Right ventricle myocardium superior (tissue), 1 donor: ENCODE measurements at regions of chr9 and their contacts with region 1.

Region 1: GRCh38 chr9:116860509-116861120 is 173.5 kb downstream of the TRIM32 start:
- DNase-seq: peak; percentile 64
- ATAC-seq: peak; percentile 74

Region 2: DNA sequence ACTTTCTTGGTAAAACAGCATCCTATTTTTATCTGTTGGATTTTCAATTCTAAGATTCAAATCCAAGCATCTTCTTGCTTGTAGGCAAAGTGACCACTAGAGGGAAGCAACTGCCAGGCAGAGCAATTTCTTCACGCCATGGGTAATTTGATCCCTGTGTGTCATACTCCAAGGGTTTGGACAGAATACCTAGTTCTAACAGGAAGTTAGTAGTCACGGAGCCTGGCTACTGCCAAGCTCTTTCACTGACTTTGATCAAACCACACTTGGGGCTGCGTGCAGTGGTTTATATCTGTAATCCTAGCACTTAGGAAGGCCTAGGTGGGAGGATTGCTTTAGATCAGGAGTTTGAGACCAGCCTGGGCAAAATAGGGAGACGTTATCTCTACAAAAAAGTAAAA is 1269.0 kb before region 1 on chr9:
- intact Hi-C with region 1: loop called (anchors 10 kb)
- DNase-seq: peak; percentile 50
- ATAC-seq: peak; percentile 80

Region 3: DNA sequence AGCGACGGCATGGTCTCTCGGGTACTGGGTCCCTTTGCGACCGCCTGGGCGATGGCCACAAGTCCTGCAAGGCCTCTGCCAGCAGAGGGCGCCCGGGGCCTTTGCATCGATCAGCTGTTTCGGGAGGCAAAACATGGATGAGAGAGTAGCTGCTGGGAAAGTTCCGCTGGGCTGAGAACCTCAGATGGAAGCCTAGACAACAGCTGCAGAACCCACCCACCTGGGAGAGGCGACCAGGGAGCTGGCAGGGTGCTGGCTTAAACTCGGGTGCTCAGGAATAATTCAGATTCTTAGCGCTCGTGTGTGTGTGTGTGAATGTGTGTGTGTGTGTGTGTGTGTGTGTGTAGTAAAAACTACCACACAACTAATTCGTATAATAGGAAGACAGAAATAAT is 123.5 kb before region 1 on chr9:
- intact Hi-C with region 1: loop called (anchors 5 kb)
- DNase-seq: peak; percentile 85
- ATAC-seq: peak; percentile 87